ENCODE measurements at regions of chrX and their contacts with region 1.

Region 1: DNA sequence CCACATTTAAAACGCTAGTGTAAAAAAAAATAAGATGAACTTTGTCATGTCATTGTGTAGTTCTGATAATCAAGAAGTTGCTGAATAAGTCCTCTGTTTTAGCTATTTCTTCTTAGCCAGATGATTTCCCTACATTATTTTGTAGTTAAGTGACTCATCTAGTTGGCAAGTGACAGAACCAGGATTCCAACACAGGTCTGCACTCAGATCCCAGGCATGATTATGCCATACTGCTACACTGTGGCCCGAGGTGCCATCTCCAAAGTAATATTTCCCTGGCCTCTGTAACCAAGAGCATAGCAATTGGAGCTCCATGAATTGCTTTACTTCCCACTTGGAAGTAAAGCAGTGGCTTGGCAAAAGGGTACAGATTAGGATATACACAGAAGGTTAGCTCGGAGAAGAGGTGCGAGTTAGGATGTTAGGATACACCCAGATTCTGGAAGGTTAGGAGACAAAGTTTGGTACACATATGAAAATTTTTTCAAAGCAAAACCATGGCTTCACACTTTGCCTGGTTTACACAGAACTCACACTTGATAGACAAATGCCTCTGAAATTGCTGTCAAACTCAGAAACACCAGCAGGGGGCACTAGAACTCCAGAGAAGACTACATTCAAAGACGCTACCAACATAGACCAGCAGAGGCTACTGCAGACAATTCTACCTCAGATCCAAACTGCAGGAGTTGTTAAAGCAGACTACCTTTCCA is 41.4 kb downstream of the SRPX2 start:
- H3K4me3 ChIP-seq: no peak overlapping the region
- H3K27ac ChIP-seq: no peak overlapping the region
- H3K4me1 ChIP-seq: no peaks in the 10 kb centered on the region
- CTCF ChIP-seq: peak; percentile 91

Region 2: DNA sequence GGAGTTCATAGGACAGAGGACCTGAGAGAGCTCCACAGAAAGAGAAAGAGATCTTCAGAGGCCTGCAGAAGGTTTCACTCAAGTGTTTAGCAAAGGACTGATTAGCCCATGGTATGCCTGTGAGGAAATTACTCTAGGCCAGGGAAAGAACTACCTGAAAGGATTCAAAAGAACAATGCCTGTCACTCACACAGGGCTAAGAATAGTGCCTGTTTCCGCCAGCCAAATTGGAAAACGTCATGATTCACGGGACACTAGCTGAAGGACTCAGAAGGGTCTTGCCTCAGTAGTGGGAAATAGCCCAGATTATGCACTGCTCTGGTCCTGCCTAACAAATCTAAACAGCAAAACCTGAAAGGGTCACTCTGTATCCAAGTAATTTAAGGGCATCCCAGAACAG is 25.4 kb after region 1 on chrX:
- CTCF ChIA-PET with region 1: interaction called, 12 read pairs
- POLR2A ChIA-PET with region 1: no interaction called
- H3K4me3 ChIP-seq: no peak overlapping the region
- H3K27ac ChIP-seq: no peak overlapping the region
- H3K4me1 ChIP-seq: no peaks in the 10 kb centered on the region
- CTCF ChIP-seq: no peak

Region 3: DNA sequence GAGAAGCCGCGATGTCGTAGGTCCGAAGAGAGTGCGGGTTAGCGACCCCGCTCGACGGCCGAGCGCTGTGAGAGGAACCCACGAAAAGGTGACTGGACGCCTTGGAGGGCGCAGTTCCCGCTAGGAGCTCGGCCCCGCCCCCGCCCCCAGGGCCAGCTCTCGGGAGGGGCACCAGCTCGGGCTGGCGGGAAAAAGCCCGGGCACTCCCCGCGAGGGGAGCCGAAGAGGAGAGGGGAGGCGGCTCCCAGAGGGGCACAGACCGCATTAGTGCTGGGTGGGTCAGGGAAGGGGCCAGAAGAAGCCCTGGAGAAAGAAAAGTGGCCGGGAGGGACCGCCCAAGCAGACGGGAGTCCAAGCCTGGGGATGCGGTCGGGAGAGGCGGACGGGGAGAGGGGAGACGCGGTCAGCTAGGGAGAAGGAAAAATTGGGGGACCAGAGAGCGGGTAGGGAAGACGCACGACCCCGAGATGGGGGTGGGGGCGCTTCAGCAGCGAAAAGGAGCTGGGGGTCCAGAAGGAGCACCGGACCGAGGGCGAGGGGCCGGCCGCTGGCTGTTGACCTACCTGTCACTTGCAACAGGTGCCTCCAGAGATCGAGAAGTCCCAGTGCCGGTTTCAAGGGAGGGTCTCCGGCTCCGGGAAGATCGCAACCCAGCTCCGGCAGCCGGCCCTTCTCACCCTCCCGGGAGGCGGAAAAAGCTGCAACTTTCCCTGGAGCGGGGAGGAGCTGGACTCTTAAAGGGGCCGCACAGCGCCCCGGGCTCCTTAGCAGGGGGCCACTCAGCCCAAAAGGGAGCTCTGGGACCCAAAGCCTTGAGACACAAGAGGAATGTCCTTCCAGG is 46.2 kb after region 1 on chrX and contains the start of gene SYTL4:
- CTCF ChIA-PET with region 1: interaction called, 11 read pairs
- POLR2A ChIA-PET with region 1: no interaction called
- H3K4me3 ChIP-seq: peak within 1 kb of the TSS; percentile 64
- H3K27ac ChIP-seq: peak within 1 kb of the TSS; percentile 63; the same call in 1 of the 2 replicates
- H3K4me1 ChIP-seq: no peaks in the 10 kb centered on the region
- CTCF ChIP-seq: no peak

Region 4: GRCh38 chrX:101348452-101349192 is 663.2 kb after region 1 on chrX and contains the start of gene TIMM8A:
- CTCF ChIA-PET with region 1: no interaction called
- POLR2A ChIA-PET with region 1: no interaction called
- H3K4me3 ChIP-seq: peak within 1 kb of the TSS; percentile 61
- H3K27ac ChIP-seq: peak within 1 kb of the TSS; percentile 80
- H3K4me1 ChIP-seq: peaks cover 10% of the 10 kb centered on the region; the same call in 1 of the 2 replicates
- CTCF ChIP-seq: peak; percentile 25; the same call in 1 of the 2 replicates

Measured in HEK293 (cell line).